Activated B cell treated with CpG ODN at 0.5 μM for 24 hours (primary cell): ENCODE measurements at regions of chr9 and their contacts with region 1.

Region 1: GRCh38 chr9:111926421-111926875 is 29.8 kb downstream of the UGCG start:
- DNase-seq: peak; percentile 34
- ATAC-seq: peak; percentile 97
- H3K4me3 Mint-ChIP-seq: peak overlapping the region; percentile 56
- H3K27ac Mint-ChIP-seq: peak overlapping the region; percentile 83
- H3K4me1 Mint-ChIP-seq: peaks cover 48% of the 10 kb centered on the region
- H3K27me3 Mint-ChIP-seq: no peaks in the 10 kb centered on the region
- CTCF ChIP-seq: no peak

Region 2: GRCh38 chr9:111516061-111516465 is 410.4 kb before region 1 on chr9:
- CTCF ChIA-PET with region 1: no interaction called
- POLR2A ChIA-PET with region 1: no interaction called
- intact Hi-C with region 1: no loop called
- DNase-seq: no peak
- ATAC-seq: no peak
- H3K4me3 Mint-ChIP-seq: no peak overlapping the region
- H3K27ac Mint-ChIP-seq: no peak overlapping the region
- H3K4me1 Mint-ChIP-seq: no peaks in the 10 kb centered on the region
- H3K27me3 Mint-ChIP-seq: peaks cover 4% of the 10 kb centered on the region
- CTCF ChIP-seq: no peak

Region 3: GRCh38 chr9:111916234-111916645 is 10.2 kb before region 1 on chr9:
- CTCF ChIA-PET with region 1: interaction called, 4 read pairs
- POLR2A ChIA-PET with region 1: interaction called, 26 read pairs
- intact Hi-C with region 1: loop called (anchors 1 kb)
- DNase-seq: no peak
- ATAC-seq: peak; percentile 41
- H3K4me3 Mint-ChIP-seq: peak overlapping the region; percentile 9
- H3K27ac Mint-ChIP-seq: peak overlapping the region; percentile 81
- H3K4me1 Mint-ChIP-seq: peaks cover 82% of the 10 kb centered on the region
- H3K27me3 Mint-ChIP-seq: no peaks in the 10 kb centered on the region
- CTCF ChIP-seq: no peak

Region 4: DNA sequence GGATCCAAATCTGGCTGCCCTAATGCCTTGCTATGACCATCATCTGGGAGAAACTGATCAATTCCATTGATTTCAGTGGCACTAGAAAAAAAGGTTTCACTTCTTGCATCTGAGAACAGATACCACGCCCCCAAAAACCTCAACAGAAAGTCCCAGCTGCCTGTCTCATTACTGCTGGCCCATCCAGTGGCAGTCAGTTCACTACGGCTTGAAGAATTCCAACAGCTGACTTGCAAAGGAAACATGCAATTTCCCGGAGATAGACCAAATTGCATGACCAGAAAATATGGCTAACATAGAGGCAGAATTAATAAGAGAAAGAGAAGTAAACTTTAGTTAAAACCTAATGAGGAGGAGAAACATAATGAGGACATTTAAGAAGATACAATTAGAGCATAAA is 18.8 kb after region 1 on chr9:
- CTCF ChIA-PET with region 1: no interaction called
- POLR2A ChIA-PET with region 1: interaction called, 8 read pairs
- intact Hi-C with region 1: loop called (anchors 2 kb)
- DNase-seq: no peak
- ATAC-seq: peak; percentile 89
- H3K4me3 Mint-ChIP-seq: peak overlapping the region; percentile 71
- H3K27ac Mint-ChIP-seq: peak overlapping the region; percentile 75
- H3K4me1 Mint-ChIP-seq: peaks cover 53% of the 10 kb centered on the region
- H3K27me3 Mint-ChIP-seq: no peaks in the 10 kb centered on the region
- CTCF ChIP-seq: no peak

Region 5: DNA sequence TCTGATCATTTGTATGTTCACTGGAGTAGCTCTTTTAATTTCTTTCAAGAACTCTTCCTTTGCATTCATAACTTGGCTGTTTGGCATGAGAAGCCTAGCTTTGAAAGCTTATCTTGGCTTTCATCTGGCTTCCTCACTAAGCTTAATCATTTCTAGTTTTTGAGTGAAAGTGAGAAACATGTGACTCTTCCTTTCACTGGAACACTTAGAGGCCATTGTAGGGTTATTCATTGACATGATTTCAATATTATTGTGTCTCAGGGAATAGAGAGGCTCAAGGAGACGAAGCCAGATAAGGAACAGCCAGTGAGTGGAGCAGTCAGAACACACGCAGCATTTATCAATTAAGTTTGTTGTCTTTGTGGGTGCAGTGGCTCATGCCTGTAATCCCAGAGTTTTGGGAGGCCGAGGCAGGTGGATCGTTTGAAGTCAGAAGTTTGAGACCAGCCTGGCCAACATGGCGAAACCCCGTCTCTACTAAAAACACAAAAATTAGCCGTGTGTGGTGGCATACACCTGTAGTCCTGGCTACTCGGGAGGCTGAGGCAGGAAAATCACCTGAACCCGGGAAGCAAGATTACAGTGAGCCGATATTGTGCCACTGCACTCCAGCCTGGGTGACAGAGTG is 68.5 kb after region 1 on chr9:
- CTCF ChIA-PET with region 1: no interaction called
- POLR2A ChIA-PET with region 1: no interaction called
- intact Hi-C with region 1: no loop called
- DNase-seq: no peak
- ATAC-seq: peak; percentile 19
- H3K4me3 Mint-ChIP-seq: peak overlapping the region; percentile 2
- H3K27ac Mint-ChIP-seq: peak overlapping the region; percentile 71
- H3K4me1 Mint-ChIP-seq: peaks cover 43% of the 10 kb centered on the region
- H3K27me3 Mint-ChIP-seq: no peaks in the 10 kb centered on the region
- CTCF ChIP-seq: no peak

Region 6: DNA sequence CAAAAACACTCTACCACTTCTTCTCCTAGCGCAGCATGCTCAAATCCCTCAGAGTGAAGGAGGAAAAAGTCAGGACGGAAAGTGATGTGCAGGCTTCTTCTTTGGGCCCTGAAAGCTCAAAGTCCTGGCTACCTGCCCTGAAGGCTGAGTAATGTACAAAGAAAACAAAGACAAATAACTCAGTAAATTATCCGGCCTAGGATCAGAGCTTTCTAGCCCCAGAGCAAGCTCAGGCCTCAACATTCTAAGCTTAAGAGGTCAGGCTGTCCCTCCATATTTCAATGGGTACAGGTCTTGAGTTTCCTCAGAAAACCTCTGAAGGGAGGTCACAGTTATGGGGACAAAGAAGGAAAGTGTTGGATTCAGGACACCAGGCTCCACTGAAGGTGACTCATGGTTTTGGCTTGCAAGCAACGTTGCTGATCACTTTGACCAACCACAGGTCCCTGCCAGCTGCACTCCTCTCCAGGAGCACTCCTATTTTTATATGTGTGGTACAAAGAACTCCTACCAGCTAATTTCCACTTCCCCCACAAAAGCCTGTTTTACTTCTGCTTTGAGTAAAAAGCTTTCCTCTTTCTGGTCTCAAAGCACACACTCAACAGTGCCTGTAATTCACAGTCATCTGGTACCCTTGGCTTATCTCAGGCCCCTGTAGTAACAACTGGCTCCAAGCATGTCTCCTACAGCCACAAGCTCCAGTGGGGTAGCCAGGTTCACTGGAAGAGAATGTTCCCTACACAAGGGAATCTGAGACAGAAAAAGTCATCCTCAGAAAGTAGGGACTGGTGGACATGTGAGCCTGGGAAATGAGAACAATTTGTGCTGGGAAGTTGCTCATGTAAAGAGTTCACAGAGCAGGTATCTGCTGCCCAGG is 85.8 kb after region 1 on chr9:
- CTCF ChIA-PET with region 1: interaction called, 4 read pairs
- POLR2A ChIA-PET with region 1: interaction called, 13 read pairs
- intact Hi-C with region 1: no loop called
- DNase-seq: no peak
- ATAC-seq: peak; percentile 85
- H3K4me3 Mint-ChIP-seq: peak overlapping the region; percentile 47
- H3K27ac Mint-ChIP-seq: peak overlapping the region; percentile 93
- H3K4me1 Mint-ChIP-seq: peaks cover 84% of the 10 kb centered on the region
- H3K27me3 Mint-ChIP-seq: no peaks in the 10 kb centered on the region
- CTCF ChIP-seq: no peak